H1 (cell line): ENCODE measurements at regions of chr1 and their contacts with region 1.

Region 1: DNA sequence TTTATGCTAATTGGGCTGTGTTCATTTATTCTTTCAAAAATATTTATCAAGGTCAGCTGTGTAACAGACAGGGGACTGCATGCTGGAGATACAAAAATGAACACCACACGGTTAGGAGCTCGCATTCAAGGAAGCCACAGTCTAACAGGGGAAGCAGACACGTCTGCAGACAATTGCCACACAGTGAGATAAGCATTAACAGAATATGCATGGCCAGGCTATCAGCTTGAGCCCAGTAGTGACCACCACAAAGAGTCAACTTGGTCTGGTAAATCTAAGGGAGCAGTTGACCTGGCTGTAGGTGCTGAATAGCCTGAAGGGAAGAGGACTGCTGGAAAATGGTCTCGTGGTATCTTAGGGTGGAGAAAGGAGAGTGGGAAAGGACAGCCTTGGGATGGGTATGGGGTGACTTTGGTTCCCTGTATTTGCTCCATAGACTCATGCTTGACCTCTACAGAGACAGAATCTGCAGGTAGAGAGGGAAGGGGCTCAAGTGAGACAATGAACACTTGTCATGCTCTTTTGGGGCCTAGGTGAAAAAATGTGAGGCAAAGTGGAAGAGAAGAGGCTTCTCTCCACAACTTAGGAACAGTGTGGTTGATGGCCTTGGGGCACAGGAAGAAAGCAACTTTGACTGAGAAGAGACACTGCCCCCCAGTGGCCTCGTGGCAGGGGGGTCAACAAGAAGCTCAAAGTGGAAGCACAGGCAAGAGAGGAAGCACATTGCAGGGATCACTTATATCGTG is 7.6 kb upstream of the NPL start:
- DNase-seq: peak in 1 of 2 experiments; percentile 83
- H3K4me3 ChIP-seq: no peak overlapping the region
- H3K27ac ChIP-seq: no peak overlapping the region
- H3K4me1 ChIP-seq: peaks cover 0 to 8% (median 3%) of the 10 kb centered on the region in 4 experiments; a peak in 2 of 7 replicates
- H3K27me3 ChIP-seq: no peaks in the 10 kb centered on the region
- CTCF ChIP-seq: peak; percentile 83 to 88 (median 85)
- EP300 ChIP-seq: no peak
- POLR2A ChIP-seq: no peak
- RAD21 ChIP-seq: peak; percentile 89 to 93

Region 2: GRCh38 chr1:182629499-182630096 is 152.4 kb before region 1 on chr1:
- CTCF ChIA-PET with region 1: interaction called, 35 read pairs
- POLR2A ChIA-PET with region 1: interaction called, 5 read pairs
- DNase-seq: no peak
- H3K4me3 ChIP-seq: no peak overlapping the region
- H3K27ac ChIP-seq: no peak overlapping the region
- H3K4me1 ChIP-seq: peaks cover 6 to 21% (median 15%) of the 10 kb centered on the region in 4 experiments; a peak in 6 of 7 replicates
- H3K27me3 ChIP-seq: no peaks in the 10 kb centered on the region
- CTCF ChIP-seq: no peak
- EP300 ChIP-seq: no peak
- POLR2A ChIP-seq: no peak
- RAD21 ChIP-seq: no peak

Region 3: DNA sequence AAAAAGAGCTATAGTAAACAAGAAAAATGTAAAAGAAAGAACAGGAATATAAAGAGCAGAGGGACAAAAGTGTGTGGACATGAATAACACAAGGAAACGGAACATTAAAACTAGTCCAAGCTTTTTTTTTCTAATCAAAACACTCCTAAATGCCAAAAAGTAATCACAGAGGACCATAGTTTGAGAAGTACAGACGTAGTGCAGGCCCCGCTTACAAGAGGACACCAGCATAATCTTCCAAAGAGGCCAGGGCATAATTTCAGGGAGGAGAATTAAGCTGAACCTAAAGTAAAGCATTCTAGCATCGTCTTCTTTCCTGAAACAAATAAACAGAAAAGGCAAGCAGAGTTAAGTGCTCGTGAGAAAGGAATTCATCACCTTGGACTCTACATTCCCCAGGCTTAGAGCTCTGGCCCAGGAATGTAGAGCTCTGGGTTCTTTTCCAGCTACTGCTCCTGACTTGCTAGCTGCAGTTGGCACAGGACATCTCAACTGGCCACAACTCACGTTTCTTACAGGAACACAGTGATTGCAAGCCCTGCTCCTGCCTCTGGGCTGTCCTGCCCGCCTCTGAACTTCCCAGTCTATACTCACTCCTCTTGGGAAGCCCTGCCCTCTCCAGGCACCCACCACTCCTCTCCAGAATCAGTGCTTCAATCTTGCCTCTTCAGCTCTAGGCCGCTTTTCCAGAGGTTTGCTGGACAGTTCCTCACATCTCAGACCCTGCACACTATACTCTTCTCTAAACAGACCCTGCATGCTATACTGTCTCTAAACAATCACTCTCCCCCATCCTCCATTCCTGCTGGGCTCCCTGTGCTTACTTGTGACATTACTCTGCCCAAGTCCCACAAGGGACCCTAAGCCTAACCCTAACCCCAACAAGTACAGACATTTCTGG is 107.4 kb before region 1 on chr1:
- CTCF ChIA-PET with region 1: interaction called, 12 read pairs
- POLR2A ChIA-PET with region 1: interaction called, 3 read pairs
- DNase-seq: no peak
- H3K4me3 ChIP-seq: no peak overlapping the region
- H3K27ac ChIP-seq: no peak overlapping the region
- H3K4me1 ChIP-seq: peaks cover 6 to 15% (median 7%) of the 10 kb centered on the region in 4 experiments
- H3K27me3 ChIP-seq: peaks cover 0 to 4% (median 0%) of the 10 kb centered on the region in 4 experiments; a peak in 1 of 7 replicates
- CTCF ChIP-seq: no peak
- EP300 ChIP-seq: no peak
- POLR2A ChIP-seq: no peak
- RAD21 ChIP-seq: no peak; a peak in 1 of 4 replicates

Region 4: DNA sequence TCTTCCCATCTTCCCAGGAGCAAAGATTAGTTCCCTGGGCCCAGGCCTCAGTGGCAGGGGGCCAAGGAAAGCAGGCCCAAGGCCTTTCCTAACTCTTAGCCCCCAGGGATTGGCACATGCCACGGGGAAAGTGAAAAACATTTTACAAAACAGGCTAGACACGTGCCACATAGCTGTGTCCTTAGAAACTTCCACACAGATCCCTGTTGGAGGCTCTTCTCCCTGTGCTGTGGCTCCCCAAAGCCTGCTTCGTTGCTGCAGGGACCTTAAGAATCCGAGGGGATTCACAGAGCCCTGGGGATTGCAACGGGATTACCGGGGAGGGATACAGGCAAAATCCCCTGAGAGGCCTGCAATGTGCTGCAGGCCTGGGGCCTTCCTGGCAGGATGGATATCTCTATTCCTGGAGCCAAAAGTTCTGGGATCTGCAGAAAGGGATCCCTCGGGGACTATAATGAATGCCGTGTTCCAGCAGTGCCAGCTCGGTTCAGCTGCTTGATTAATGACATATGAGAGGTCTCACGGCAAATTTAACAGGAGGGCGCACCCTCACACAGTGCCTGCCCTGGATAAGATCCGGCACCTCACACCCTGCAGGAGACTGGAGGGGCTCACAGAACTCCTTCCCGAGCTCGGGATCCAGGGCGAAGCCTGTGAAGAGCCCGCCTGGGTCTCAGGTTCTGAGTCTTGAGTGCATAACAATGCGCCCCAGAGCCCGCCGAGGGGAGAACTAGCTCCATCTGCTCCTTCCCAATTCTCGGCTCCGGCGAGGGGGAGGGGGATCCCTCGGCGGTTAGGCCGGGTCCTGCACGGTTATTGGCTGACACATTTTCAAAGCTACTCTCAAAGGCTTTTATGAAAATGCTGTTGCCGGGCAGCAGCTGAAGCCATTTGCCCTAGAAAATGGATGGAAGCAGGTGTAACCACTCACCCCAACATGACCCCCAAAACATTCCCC is 82.3 kb before region 1 on chr1:
- CTCF ChIA-PET with region 1: interaction called, 27 read pairs
- POLR2A ChIA-PET with region 1: interaction called, 3 read pairs
- DNase-seq: peak; percentile 50 to 86
- H3K4me3 ChIP-seq: peak overlapping the region; percentile 16 to 53 (median 27); a peak in 7 of 8 replicates
- H3K27ac ChIP-seq: peak overlapping the region; percentile 59
- H3K4me1 ChIP-seq: peaks cover 10 to 32% (median 16%) of the 10 kb centered on the region in 4 experiments
- H3K27me3 ChIP-seq: no peaks in the 10 kb centered on the region
- CTCF ChIP-seq: no peak
- EP300 ChIP-seq: no peak; a peak in 1 of 3 replicates
- POLR2A ChIP-seq: peak in 1 of 2 experiments; percentile 49; a peak in 1 of 3 replicates
- RAD21 ChIP-seq: peak in 1 of 2 experiments; percentile 38; a peak in 2 of 4 replicates

Region 5: DNA sequence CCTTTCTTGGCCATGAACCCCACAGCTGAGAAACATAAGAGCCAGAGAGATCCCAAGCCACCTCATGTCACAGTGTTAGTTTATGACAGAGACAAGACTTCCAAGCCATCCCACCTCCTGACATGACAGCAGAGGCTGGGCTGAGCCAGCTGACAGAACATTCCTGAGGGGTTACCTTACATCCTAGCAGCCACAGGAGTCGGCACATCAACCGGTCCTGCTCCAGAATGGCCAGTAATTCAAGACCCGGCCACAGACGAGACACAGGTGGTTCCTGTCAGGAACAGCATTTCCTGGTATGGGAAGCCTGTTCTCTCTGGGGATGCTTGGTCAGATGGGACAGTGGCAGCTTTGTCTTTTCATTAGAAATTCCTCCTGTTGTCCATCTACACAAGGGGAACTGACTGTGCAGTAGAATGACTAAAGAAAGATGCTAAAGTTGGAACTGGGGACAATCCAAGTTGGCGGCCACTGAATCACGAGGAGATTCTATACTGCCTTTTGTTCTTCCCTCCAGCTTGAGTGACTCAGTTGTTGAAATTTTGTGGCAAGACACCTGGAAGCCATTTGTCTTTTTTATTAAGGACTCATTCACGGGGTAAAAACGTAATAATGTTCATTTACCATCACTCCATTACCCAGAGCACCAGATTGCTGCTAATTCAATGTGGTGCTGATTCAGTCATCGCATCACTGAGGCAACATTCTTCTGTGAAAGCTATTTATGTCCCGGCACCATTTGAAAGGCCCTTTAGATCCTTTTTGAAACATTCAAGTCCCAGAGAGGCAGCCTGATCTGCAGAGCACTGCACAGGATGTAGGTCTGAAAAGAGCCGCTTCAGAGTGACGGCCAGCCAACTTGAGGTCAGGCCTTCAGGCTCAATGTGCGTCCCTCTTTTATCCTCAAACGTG is 29.7 kb before region 1 on chr1:
- CTCF ChIA-PET with region 1: interaction called, 48 read pairs
- POLR2A ChIA-PET with region 1: no interaction called
- DNase-seq: no peak
- H3K4me3 ChIP-seq: no peak overlapping the region
- H3K27ac ChIP-seq: no peak overlapping the region
- H3K4me1 ChIP-seq: no peaks in the 10 kb centered on the region
- H3K27me3 ChIP-seq: no peaks in the 10 kb centered on the region
- CTCF ChIP-seq: no peak
- EP300 ChIP-seq: no peak
- POLR2A ChIP-seq: no peak
- RAD21 ChIP-seq: no peak

Region 6: GRCh38 chr1:182795563-182796228 is 13.7 kb after region 1 on chr1:
- CTCF ChIA-PET with region 1: interaction called, 118 read pairs
- POLR2A ChIA-PET with region 1: no interaction called
- DNase-seq: no peak
- H3K4me3 ChIP-seq: no peak overlapping the region
- H3K27ac ChIP-seq: no peak overlapping the region
- H3K4me1 ChIP-seq: peaks cover 0 to 5% (median 1%) of the 10 kb centered on the region in 4 experiments; a peak in 1 of 7 replicates
- H3K27me3 ChIP-seq: peaks cover 0 to 3% (median 2%) of the 10 kb centered on the region in 4 experiments; a peak in 4 of 7 replicates
- CTCF ChIP-seq: no peak
- EP300 ChIP-seq: no peak
- POLR2A ChIP-seq: no peak
- RAD21 ChIP-seq: no peak

Region 7: DNA sequence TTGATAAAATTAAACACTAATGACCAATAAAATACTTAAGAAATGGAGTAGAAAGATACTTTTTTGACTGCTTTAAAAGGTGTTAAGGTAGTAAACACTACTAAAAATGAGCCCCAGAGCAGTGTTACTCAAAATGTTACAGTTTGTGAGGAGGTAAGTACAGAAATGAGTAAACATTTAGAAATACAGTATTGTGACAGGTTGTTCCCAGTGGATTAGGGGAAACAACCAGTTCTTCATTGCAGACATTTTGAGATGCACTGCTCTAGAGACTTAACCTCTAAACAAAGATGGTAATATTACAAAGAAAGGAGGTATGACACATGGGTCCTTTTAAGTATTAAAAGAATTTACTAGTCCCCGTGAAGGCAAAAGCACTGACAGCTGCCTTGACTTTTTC is 69.8 kb after region 1 on chr1:
- CTCF ChIA-PET with region 1: no interaction called
- POLR2A ChIA-PET with region 1: no interaction called
- DNase-seq: no peak
- H3K4me3 ChIP-seq: no peak overlapping the region
- H3K27ac ChIP-seq: no peak overlapping the region
- H3K4me1 ChIP-seq: no peaks in the 10 kb centered on the region
- H3K27me3 ChIP-seq: no peaks in the 10 kb centered on the region
- CTCF ChIP-seq: no peak
- EP300 ChIP-seq: no peak
- POLR2A ChIP-seq: no peak
- RAD21 ChIP-seq: no peak

Region 8: GRCh38 chr1:182861994-182862393 is 80.0 kb after region 1 on chr1:
- CTCF ChIA-PET with region 1: no interaction called
- POLR2A ChIA-PET with region 1: no interaction called
- DNase-seq: no peak
- H3K4me3 ChIP-seq: no peak overlapping the region
- H3K27ac ChIP-seq: no peak overlapping the region
- H3K4me1 ChIP-seq: no peaks in the 10 kb centered on the region
- H3K27me3 ChIP-seq: no peaks in the 10 kb centered on the region
- CTCF ChIP-seq: no peak
- EP300 ChIP-seq: no peak
- POLR2A ChIP-seq: no peak
- RAD21 ChIP-seq: no peak